Activated CD8-positive, alpha-beta T cell treated with anti-CD3 and anti-CD28 coated beads, Interleukin-2, amount 10 ng/mL, durations not matched to agents 7 days and 5 days (primary cell): ENCODE measurements at regions of chr20 and their contacts with region 1.

Region 1: DNA sequence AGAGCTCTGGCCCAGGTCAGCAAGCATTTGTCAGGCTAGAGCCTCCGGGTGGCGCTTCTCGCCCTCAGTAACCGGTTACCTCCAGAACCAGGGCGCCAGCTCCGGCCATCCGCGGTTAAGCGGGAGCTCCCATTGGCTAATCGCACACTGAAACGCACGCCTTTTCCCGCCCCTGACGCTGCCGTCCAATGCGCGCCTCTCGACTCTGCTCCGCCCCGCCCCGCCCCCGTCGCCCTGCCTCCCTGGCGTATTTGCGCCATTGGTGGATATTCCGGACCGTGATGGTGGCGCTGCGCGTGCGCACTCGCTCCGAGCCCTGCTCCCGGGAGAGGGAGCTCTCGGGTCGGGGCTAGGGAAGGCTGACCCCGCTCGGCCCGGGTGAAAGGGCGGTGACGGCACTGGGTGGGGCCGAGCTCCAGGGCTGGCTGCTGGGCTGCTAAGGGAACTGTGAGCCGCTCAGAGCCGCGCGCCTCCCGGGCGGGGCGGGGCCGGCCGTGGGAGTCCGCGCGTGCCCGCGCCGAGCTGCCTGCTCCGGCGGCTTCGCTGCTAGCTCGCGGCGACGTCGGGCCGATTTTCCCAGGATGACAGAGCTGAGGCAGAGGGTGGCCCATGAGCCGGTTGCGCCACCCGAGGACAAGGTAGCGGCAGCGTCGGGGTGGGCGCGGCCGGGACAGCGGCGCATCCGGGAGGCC is at the start of gene CDS2:
- DNase-seq: peak; percentile 100
- ATAC-seq: peak; percentile 95
- H3K4me3 Mint-ChIP-seq: peak within 1 kb of the TSS; percentile 87
- H3K27ac Mint-ChIP-seq: peak within 1 kb of the TSS; percentile 98
- H3K4me1 Mint-ChIP-seq: peaks cover 52% of the 10 kb centered on the region
- H3K27me3 Mint-ChIP-seq: no peaks in the 10 kb centered on the region
- total RNA-seq, gene CDS2: 56.2 to 58.3 TPM

Region 2: GRCh38 chr20:5181956-5182355 is 55.3 kb after region 1 on chr20:
- CTCF ChIA-PET with region 1: interaction called, 16 read pairs
- POLR2A ChIA-PET with region 1: no interaction called
- DNase-seq: no peak
- ATAC-seq: no peak
- H3K4me3 Mint-ChIP-seq: no peak overlapping the region
- H3K27ac Mint-ChIP-seq: no peak overlapping the region
- H3K4me1 Mint-ChIP-seq: no peaks in the 10 kb centered on the region
- H3K27me3 Mint-ChIP-seq: no peaks in the 10 kb centered on the region

Region 3: DNA sequence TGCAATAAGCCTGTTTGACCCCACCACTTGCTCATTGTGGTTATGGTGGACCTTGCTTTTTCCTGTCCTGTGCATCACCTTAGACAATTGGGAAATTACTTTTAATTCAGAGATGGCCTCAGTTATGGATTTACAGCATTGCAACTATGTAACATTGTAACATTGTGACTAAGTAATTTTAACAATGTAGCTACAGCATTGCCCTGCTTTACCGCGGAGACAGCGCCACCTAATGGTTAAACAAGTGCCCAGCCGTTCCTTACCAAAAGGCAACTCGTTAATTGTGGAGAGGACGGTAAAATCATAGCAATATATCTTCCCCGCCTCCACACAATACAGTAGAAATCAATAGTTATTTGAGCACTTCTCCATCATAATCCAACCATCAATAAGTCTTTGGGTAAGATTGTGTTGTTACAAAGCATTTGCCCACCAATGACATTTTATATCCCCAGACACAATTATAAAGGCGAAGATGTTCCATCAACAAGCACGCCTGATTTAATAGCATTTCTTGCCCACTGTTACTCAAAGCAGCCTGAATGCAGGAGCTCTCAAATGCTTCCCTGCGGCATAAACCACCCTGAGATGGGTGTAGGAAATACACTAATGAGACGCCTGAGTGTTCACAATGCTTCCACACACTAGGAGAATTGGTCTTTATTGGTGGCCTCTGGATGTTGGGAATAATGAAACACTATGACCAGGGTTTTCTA is 96.4 kb after region 1 on chr20:
- CTCF ChIA-PET with region 1: interaction called, 22 read pairs
- POLR2A ChIA-PET with region 1: interaction called, 5 read pairs
- DNase-seq: peak; percentile 75
- ATAC-seq: peak; percentile 77
- H3K4me3 Mint-ChIP-seq: no peak overlapping the region
- H3K27ac Mint-ChIP-seq: no peak overlapping the region
- H3K4me1 Mint-ChIP-seq: no peaks in the 10 kb centered on the region
- H3K27me3 Mint-ChIP-seq: no peaks in the 10 kb centered on the region

Region 4: DNA sequence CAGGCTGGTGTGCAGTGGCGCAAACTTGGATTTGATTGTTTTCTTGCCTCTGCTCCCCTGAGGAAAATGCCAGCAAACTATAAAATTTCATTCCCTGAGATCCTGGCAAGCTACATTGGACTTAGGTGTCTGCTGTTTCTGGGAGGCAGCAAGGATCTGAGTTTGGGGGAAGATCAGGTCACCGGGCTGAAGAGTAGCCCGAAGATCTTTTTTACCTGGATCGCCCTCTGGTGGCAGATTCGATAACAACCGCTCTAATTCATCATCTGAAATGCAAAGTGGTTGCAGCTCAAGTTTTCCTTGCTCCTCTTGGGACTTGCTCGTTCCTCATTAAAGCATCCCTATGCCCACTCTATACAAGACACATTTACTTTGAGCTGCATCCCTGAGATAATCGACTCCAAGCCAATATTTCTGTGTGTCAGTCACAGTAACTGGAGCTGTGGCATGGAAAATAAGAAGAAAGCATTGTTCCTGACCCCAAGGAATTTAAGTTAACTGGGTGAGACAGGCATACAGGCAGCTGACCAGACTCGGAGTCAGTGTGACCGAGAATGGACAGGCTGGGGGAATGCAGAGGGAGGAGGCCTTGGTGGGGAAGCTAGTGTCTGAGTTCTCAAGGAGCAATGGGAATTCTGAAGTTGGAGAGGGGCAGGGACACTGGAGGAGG is 321.9 kb after region 1 on chr20:
- CTCF ChIA-PET with region 1: interaction called, 12 read pairs
- POLR2A ChIA-PET with region 1: no interaction called
- DNase-seq: peak; percentile 68
- ATAC-seq: peak; percentile 55
- H3K4me3 Mint-ChIP-seq: no peak overlapping the region
- H3K27ac Mint-ChIP-seq: no peak overlapping the region
- H3K4me1 Mint-ChIP-seq: no peaks in the 10 kb centered on the region
- H3K27me3 Mint-ChIP-seq: peaks cover 28% of the 10 kb centered on the region